Dorsolateral prefrontal cortex (tissue), 120 donors: ENCODE measurements at regions of chr5 and their contacts with region 1.

Region 1: GRCh38 chr5:180291943-180292831 is at the start of gene MAPK9:
- DNase-seq: peak; percentile 65 to 92 (median 80)
- H3K4me3 ChIP-seq: peak within 1 kb of the TSS; percentile 74 to 99 (median 92)
- H3K27ac ChIP-seq: peak within 1 kb of the TSS; percentile 42 to 98 (median 94)
- H3K27me3 ChIP-seq: no peaks in the 10 kb centered on the region
- CTCF ChIP-seq: peak in 30 of 56 donors; percentile 7 to 53 (median 27)
- total RNA-seq, gene MAPK9: 64.6 to 182 (median 123) TPM

Region 2: DNA sequence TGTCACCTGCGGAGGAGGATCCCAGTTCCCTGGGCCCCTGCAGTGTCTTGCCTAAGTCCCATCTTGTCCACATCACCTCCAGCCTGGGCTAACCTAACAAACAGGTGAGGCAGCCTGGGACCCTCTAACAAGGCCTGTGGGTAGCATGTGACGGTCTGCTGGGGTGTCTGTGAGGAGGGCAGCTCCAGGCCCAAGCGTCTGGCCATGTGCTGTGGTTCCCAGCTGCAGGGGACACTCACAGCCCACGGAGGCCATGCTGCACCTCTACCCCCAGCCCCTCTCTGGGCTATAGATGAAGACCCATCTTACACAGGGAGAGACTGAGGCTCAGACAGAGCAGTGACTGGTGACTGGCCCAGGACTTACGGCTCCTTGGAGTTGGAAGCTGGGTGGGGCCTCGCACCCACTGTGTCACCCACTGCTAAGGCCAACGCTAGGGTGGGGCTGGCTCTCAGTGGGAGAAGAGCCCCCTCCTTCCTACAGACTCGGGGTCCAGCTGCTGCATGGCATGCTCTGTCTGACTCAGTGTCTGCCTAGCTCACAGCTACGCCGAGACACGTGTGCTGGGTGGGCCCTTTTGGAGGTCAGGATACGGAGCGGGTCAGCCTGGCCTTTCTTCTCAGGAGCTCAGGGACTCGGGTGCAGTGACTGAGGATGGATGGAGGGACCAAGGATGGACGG is 179.9 kb before region 1 on chr5:
- intact Hi-C with region 1: no loop called
- DNase-seq: peak in 4 of 10 donors; percentile 1 to 39 (median 17)
- H3K4me3 ChIP-seq: no peak overlapping the region
- H3K27ac ChIP-seq: no peak overlapping the region
- H3K27me3 ChIP-seq: no peaks in the 10 kb centered on the region
- CTCF ChIP-seq: no peak

Region 3: DNA sequence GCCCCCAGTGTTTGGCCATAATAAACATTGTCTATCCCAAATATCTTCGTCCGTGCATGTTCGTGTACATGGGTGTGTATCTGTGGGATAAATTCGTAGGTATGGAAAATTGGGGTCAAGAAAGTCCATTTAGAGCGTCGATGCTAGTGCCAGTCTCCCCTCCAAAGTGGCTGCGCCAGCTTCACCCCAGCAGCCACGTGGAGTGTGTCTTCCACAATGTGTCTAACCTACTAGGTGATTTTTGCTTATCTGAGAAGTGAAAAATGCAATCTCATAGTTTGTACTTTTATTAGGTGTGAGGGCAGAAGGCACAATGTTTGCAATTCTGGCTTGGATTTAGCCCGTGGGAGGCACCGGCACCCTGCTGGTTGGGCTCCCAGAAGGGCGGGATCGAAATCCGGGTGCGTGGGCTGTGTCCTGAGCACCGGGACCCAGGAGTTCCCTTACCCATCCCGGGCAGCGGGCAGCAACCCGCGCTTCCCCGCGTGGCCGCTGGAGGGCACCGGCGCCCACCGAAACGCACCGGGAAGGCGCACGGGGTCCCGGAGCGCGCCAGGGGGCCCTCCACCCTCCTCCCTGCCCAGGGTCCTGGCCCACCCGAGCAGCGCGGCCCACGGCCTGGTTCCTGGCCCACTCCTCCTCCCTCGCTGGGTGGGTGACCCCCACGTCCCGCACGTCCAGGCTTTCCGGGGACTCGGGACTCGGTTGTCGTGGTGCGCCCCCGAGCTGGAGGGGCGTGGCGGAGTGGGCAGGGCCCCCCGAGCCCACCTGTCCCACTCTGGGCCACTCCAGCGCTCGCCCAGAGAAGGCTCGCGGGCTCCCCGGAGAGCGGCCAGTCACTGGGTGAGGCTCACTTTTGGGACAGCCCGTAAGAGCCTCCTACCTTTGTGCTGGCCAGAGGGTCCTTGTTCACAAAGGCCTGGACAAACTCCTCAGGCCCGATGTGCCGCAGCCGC is 165.2 kb before region 1 on chr5:
- intact Hi-C with region 1: loop called in 1 of 2 experiments (anchors 10 kb)
- DNase-seq: peak in 6 of 10 donors; percentile 29 to 77 (median 50)
- H3K4me3 ChIP-seq: peak overlapping the region in 5 of 59 donors; percentile 2 to 33 (median 11)
- H3K27ac ChIP-seq: peak overlapping the region in 13 of 59 donors; percentile 1 to 87 (median 77)
- H3K27me3 ChIP-seq: no peaks in the 10 kb centered on the region
- CTCF ChIP-seq: peak; percentile 61 to 94 (median 87)

Region 4: DNA sequence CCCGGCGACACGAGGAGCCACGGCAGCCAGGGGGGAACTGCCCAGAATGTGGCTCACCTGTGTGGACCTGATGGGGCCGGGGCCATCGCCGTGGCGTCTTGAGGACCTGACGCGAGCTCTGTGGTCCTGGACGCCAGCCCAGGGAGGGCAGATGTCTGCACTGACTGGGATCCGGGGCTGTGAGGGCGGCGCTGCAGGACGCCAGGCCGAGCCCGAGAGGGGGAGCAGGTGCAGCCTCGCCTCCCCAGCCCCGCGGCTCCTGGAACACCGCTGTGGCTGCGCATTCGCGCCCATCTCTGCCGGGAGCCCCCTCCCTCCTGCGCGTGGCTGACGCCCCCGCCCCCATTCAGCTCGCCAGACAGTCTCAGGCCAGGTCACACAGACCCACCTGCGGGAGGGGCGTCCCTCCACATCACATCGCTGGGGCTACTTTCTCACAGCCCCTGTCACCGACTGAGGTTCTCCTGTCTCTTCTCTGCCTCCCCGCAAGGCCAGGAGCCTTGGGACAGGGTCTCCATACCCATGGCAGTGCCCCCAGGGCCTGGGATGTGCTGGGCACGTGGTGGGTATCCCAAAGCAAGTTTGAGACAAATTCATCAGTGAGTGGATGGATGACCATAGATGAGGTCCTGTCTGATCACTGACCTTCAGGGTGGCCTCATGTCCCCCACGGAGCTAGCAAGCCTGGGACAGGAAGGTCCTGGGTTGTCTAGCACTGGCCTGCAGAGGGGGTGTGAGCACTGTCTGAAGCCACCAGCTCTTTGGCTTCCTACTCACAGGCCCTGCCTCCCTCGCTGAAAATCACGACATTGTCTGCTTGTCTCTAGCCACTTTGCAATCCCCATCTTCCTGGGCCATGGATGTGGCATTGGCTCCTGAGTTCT is 130.5 kb before region 1 on chr5:
- intact Hi-C with region 1: loop called in 1 of 2 experiments (anchors 10 kb)
- DNase-seq: peak in 7 of 10 donors; percentile 47 to 80 (median 74)
- H3K4me3 ChIP-seq: peak overlapping the region in 17 of 59 donors; percentile 4 to 33 (median 13)
- H3K27ac ChIP-seq: peak overlapping the region in 44 of 59 donors; percentile 2 to 93 (median 54)
- H3K27me3 ChIP-seq: no peaks in the 10 kb centered on the region
- CTCF ChIP-seq: peak in 53 of 56 donors; percentile 11 to 84 (median 55)

Region 5: GRCh38 chr5:180209137-180209581 is 83.0 kb before region 1 on chr5 and contains the start of gene RASGEF1C:
- intact Hi-C with region 1: loop called in 1 of 2 experiments (anchors 10 kb)
- DNase-seq: peak in 5 of 10 donors; percentile 58 to 80 (median 68)
- H3K4me3 ChIP-seq: peak within 1 kb of the TSS; percentile 38 to 74 (median 63)
- H3K27ac ChIP-seq: peak within 1 kb of the TSS in 26 of 59 donors; percentile 3 to 82 (median 51)
- H3K27me3 ChIP-seq: peaks cover 0 to 2% (median 0%) of the 10 kb centered on the region in 45 donors
- CTCF ChIP-seq: peak in 37 of 56 donors; percentile 9 to 69 (median 47)
- total RNA-seq, gene RASGEF1C: 6.8 to 16.9 (median 11.4) TPM

Region 6: DNA sequence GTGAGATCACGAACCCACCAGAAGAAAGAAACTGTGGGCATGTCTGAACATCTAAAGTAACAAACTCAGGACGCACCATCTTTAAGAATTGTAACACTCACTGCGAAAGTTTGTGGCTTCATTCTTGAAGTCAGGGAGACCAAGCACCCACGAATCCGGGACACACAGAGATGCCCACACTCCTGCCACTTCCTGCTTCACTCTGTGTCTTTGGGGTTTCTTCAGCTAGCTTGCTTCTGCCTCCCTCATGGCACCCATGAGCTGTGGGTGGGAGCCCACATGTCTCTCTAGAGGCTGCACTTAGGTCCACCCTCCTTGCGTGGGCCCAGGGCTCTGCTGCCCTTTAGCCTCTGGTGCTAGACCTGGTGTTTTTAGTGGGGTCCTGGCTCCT is 140.8 kb after region 1 on chr5:
- intact Hi-C with region 1: loop called (anchors 1 to 2 kb)
- DNase-seq: no peak
- H3K4me3 ChIP-seq: no peak overlapping the region
- H3K27ac ChIP-seq: no peak overlapping the region
- H3K27me3 ChIP-seq: no peaks in the 10 kb centered on the region
- CTCF ChIP-seq: no peak

Region 7: DNA sequence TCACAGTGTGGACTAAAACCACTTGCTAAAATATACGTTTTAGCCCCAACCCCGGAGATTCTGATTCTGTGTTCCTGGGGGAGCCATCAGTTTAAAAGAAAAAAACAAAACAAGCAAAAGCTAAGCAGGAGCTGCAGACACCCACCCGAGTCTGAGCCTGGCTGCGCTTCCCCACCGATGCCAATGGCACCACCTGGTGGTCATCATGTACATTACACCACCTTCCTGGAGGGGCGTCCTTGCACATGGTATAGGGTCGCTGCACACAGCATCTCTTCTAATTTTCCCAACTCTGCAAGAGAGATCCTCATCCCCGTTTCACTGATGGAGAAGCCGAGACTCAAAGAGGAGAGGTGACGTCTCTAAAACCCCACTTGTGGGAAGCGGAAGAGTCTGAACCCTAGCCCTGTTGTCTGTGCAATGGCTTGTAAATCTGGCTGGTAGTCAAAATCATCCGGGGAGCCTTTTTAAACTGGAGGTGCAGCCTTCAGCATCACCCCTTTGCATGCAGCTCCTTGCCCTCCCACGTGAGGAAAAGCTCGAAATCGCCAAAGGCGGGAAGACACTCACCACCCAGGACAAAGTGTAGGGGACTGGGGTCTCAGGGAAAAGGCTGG is 178.9 kb after region 1 on chr5:
- intact Hi-C with region 1: loop called (anchors 1 to 2 kb)
- DNase-seq: peak in 9 of 10 donors; percentile 41 to 82 (median 65)
- H3K4me3 ChIP-seq: no peak overlapping the region
- H3K27ac ChIP-seq: no peak overlapping the region
- H3K27me3 ChIP-seq: peaks cover 0 to 4% (median 0%) of the 10 kb centered on the region in 45 donors
- CTCF ChIP-seq: peak; percentile 84 to 98 (median 95)

Region 8: DNA sequence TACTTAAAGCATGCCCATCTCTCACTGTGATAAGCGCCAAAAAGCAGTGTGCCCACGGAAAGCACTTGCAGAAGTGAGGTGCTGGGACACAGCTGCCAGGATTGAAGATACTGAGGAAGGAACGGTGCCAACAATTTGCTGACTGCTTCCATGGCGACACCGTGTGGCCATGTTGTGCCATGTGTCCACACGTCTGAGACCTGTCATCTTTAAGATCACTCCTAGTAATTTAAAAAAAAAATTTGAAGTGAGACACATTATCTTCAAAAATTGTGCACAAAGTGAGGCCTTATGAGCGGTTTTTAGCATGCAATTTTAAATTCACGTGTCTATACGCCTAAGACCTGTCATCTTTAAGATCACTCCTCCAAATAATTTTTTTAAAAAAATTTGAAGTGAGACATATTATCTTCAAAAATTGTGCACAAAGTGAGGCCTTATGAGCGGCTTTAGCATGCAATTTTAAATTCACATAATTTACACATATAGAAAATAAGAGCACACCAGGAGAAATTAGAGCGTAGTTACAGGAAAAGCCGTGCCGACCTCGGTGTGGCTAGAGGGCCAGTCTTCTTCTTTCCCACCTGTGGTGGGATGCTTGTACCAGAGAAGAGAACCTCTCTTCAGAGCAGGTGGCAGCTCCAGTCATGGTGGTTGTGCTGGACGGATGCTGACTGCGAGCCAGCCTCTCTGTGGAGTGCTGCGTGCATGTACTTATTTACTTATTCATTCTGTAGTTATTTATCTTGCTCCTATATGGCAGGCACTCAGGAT is 378.6 kb after region 1 on chr5:
- intact Hi-C with region 1: loop called in 1 of 2 experiments (anchors 5 kb)
- DNase-seq: peak; percentile 55 to 80 (median 76)
- H3K4me3 ChIP-seq: peak overlapping the region in 8 of 59 donors; percentile 11 to 45 (median 22)
- H3K27ac ChIP-seq: no peak overlapping the region
- H3K27me3 ChIP-seq: peaks cover 0 to 22% (median 10%) of the 10 kb centered on the region in 45 donors
- CTCF ChIP-seq: peak; percentile 60 to 87 (median 78)